Panc1 (cell line): ENCODE measurements at regions of chr22 and their contacts with region 1.

Region 1: DNA sequence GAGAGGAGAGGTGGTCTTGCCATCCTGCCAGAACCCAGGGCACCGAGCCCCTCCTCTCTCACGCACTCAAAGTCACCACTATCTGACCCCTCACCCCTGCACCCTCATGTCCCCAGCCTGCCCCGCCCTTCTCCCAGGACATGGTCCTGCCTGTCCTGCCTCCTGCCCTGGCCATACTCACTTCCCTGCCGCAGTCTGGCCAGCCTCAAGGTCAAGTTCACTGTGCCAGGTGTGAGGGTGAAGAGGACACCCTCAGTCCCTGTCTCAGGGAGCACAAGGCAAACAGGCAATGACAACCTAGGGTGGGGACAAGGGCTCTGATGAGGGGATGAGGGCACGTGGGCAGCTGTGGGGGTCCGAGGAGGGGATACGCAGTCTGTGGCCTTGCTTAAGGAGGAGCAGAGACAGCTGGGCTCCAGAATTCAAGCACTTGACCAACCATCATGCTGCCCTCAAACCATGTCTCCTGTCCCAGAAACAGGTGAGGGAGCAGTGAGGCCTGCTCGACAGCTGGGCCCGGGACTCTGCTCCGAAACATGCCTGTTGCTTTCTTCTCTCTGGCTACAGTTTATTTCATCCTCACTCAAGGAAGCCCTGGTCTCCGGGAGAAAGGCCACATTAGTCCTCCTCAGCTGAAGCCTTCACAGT is 36.6 kb downstream of the PDGFB start:
- DNase-seq: no peak
- ATAC-seq: no peak
- H3K4me3 ChIP-seq: no peak overlapping the region
- H3K27ac ChIP-seq: peak overlapping the region; percentile 79
- H3K4me1 ChIP-seq: peaks cover 53% of the 10 kb centered on the region
- H3K27me3 ChIP-seq: no peaks in the 10 kb centered on the region
- CTCF ChIP-seq: no peak

Region 2: DNA sequence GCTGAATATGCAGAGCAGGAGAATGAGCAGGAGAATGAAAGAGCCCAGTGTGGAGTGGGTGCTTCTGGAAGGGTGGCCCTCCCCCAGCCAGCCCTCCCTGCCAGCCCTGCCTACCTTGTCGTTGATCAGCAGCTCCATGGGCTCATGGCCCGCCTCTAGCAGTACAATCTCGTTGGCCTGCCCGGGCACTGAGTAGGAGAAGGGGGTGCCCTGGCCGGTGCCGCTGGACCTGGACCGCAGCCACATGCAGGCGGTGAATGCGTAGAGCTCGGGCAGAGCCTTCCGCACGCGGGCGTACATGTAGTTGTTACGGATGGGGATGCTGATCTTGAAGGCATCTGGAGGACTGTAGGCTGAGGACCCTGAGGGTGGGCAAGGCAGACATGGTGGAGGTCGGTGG is 381.8 kb before region 1 on chr22:
- CTCF ChIA-PET with region 1: no interaction called
- POLR2A ChIA-PET with region 1: interaction called, 12 read pairs
- in situ Hi-C with region 1: no loop called
- intact Hi-C with region 1: no loop called
- DNase-seq: no peak
- ATAC-seq: no peak
- H3K4me3 ChIP-seq: no peak overlapping the region
- H3K27ac ChIP-seq: no peak overlapping the region
- H3K4me1 ChIP-seq: no peaks in the 10 kb centered on the region; the same call in 1 of the 2 replicates
- H3K27me3 ChIP-seq: no peaks in the 10 kb centered on the region
- CTCF ChIP-seq: no peak

Region 3: DNA sequence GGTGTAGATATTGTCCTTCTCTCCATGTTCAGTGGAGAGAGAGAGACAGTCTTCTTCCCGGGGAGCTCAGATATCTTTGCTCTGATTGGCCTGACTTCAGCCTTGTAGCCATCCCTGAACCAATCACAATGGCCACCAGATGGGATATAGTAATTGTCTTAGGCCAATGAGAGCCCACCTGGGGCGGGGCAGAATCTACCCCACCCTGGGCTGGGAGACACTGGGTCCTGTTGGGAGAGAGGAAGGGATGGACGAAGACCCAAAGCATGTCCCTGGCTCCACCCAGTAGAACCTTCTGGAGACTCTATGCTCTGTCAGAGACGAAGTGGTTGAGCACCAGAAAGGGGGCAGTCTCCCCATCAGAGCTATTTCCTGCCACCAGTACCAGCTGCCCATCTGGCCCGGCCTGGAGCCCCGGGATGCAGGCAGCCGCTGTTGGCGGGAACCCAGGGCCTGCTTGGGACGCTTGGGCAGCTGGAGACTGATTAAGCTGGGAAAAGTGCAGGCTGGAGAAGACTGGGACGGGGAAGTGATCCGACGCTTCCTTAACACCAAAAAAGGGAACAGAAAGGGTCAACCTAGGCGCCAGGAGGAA is 24.0 kb before region 1 on chr22:
- CTCF ChIA-PET with region 1: no interaction called
- POLR2A ChIA-PET with region 1: no interaction called
- in situ Hi-C with region 1: no loop called
- intact Hi-C with region 1: no loop called
- DNase-seq: no peak
- ATAC-seq: no peak; the same call in 1 of the 2 replicates
- H3K4me3 ChIP-seq: no peak overlapping the region
- H3K27ac ChIP-seq: peak overlapping the region; percentile 78
- H3K4me1 ChIP-seq: peaks cover 12% of the 10 kb centered on the region
- H3K27me3 ChIP-seq: no peaks in the 10 kb centered on the region
- CTCF ChIP-seq: no peak

Region 4: DNA sequence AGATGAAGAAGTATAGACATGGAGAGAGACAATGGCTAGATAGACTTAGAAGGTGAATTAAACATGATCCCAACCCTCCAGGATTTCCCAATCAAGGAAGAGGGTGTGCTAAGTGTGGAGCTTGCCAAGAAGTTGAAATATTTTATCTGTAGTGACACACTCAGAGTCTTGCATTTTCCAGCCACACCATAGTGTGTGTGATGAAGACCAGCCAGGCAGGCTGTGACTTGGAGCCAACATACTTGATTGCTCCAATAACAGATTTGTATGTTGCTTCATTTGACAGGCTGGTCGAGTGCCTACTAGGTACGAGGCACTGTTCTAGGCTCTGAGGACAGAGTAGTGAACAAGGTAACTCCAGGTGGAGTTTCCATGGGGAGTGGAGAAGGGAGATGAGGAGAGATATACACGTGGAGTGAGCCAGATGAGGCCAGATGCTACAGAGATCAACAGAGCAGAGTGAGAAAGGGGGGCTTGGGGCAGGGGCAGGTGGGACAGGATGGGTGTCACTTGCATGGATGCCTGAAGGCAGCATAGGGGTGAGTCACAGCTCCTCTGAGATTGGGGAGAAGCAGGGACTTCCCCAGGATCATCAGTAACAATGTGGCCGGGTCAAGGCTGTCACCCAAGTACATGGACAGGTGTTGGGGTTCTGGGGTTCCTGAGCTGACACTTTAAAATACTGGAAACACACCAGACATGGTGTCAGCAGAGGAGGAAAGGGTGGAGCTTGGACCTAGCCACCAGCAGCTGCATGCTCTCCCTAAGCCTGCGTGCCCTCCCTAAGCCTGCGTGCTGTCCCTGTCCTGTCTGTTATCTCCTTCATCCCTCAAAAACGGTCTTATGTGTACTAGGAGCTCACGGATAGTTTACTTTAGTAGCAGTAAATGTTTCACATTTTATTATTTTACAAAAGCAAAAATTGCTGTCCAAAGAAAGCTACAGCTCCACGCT is 13.0 kb after region 1 on chr22:
- CTCF ChIA-PET with region 1: no interaction called
- POLR2A ChIA-PET with region 1: no interaction called
- in situ Hi-C with region 1: no loop called
- intact Hi-C with region 1: no loop called
- DNase-seq: no peak
- ATAC-seq: peak; percentile 37
- H3K4me3 ChIP-seq: no peak overlapping the region
- H3K27ac ChIP-seq: no peak overlapping the region
- H3K4me1 ChIP-seq: no peaks in the 10 kb centered on the region; the same call in 1 of the 2 replicates
- H3K27me3 ChIP-seq: no peaks in the 10 kb centered on the region
- CTCF ChIP-seq: no peak